Dendritic cell treated with granulocyte-macrophage colony-stimulating factor and Interleukin-4, amounts not matched to agents 40 ng/mL and 50 ng/mL, for 4 days (primary cell): ENCODE measurements at regions of chr6 and their contacts with region 1.

Region 1: DNA sequence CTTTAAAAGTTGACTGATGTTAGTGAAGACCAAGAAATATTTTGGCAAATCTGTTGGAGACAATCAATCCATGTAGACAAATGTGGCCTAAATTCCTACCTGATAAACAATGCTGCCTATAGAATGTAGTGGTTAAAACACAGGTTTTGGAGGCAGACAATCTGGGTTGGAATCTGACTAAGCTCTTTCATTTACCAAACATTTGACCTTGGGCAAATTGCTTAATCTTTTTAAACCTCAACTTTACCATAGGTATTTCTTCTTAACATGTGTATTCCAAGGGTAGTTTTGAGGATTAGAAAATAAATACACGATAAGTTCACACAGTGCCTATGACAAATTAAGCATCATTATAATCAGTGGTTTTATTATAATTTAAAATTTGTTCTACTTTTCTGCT is 11.5 kb downstream of the RHAG start:
- H3K4me3 Mint-ChIP-seq: no peak overlapping the region
- H3K27ac Mint-ChIP-seq: no peak overlapping the region
- H3K4me1 Mint-ChIP-seq: no peaks in the 10 kb centered on the region
- H3K27me3 Mint-ChIP-seq: no peaks in the 10 kb centered on the region

Region 2: GRCh38 chr6:49676696-49677281 is 51.6 kb after region 1 on chr6:
- intact Hi-C with region 1: no loop called
- H3K4me3 Mint-ChIP-seq: no peak overlapping the region
- H3K27ac Mint-ChIP-seq: no peak overlapping the region
- H3K4me1 Mint-ChIP-seq: no peaks in the 10 kb centered on the region
- H3K27me3 Mint-ChIP-seq: no peaks in the 10 kb centered on the region

Region 3: GRCh38 chr6:49849213-49849907 is 224.2 kb after region 1 on chr6:
- intact Hi-C with region 1: loop called (anchors 1 kb)
- H3K4me3 Mint-ChIP-seq: no peak overlapping the region
- H3K27ac Mint-ChIP-seq: no peak overlapping the region
- H3K4me1 Mint-ChIP-seq: no peaks in the 10 kb centered on the region
- H3K27me3 Mint-ChIP-seq: no peaks in the 10 kb centered on the region

Region 4: DNA sequence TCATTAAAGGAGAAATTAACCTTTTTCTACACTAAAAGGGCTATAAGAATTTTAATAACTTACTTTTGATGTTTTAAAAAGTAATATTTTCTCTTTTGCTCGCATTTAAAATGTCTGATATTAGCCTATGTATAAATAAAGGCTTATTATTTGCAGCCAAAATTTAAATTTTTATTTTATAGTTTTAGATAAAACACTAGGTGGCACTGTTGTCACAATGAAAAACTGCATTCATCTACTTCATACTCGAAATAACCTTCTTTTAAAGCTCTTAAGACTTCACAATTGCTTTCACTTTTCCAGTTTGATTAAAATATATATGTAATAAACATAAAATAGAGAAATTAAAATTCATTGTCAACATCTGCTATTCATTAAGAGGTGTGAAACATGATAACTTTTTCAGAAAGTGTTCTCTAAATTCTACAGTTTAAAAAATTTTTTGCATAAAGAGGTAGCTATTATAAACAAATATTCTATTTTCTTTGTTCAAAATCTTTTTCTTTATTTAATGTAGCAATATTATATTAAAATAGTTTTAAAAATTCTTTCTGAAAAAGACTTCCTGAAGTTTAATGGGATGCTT is 503.4 kb after region 1 on chr6:
- intact Hi-C with region 1: no loop called
- H3K4me3 Mint-ChIP-seq: no peak overlapping the region
- H3K27ac Mint-ChIP-seq: no peak overlapping the region
- H3K4me1 Mint-ChIP-seq: no peaks in the 10 kb centered on the region
- H3K27me3 Mint-ChIP-seq: no peaks in the 10 kb centered on the region

Region 5: DNA sequence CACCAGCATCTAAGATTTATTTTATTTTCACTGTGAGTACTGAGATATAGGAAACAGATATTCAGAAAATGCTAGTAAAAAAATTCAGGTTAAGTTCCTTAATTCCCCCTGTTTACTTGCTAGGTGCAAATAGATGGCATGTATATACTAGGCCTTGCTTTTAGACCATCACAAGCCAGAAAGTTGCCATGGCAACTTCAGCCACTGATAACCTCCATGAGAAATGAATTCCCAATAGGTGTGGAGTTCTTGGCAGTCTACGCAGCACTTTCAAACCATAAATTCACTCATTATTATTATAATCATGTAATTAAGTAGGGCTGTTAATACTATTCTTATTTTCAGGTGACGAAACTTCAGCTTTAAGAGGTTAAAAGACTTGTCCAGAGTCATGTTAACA is 836.6 kb after region 1 on chr6:
- intact Hi-C with region 1: no loop called
- H3K4me3 Mint-ChIP-seq: no peak overlapping the region
- H3K27ac Mint-ChIP-seq: no peak overlapping the region
- H3K4me1 Mint-ChIP-seq: no peaks in the 10 kb centered on the region
- H3K27me3 Mint-ChIP-seq: no peaks in the 10 kb centered on the region

Region 6: GRCh38 chr6:50661636-50662035 is 1036.5 kb after region 1 on chr6:
- intact Hi-C with region 1: no loop called
- H3K4me3 Mint-ChIP-seq: no peak overlapping the region
- H3K27ac Mint-ChIP-seq: no peak overlapping the region
- H3K4me1 Mint-ChIP-seq: no peaks in the 10 kb centered on the region
- H3K27me3 Mint-ChIP-seq: no peaks in the 10 kb centered on the region